HEK293T (cell line): ENCODE measurements at regions of chr4 and their contacts with region 1.

Region 1: GRCh38 chr4:95155759-95156451 is 392.9 kb downstream of the UNC5C start:
- DNase-seq: peak; percentile 27

Region 2: DNA sequence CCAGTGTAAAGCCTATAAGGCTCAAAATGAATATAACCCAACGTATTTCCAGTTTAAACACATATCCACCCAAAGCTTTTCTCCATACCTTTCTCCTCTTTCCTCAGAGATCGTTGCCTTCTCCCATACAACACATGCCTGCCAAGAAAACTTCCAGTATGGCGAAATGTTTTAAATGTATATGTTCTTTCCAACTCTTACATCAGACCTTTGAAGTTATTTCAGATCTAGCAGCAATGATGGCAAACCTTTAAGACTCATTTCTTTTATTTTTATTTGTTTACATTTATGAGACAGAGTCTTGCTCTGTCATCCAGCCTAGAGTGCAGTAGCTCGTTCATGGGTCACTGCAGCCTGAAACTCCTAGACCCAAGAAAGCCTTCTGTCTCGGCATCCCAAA is 132.8 kb before region 1 on chr4:
- CTCF ChIA-PET with region 1: no interaction called
- POLR2A ChIA-PET with region 1: no interaction called
- DNase-seq: no peak

Region 3: DNA sequence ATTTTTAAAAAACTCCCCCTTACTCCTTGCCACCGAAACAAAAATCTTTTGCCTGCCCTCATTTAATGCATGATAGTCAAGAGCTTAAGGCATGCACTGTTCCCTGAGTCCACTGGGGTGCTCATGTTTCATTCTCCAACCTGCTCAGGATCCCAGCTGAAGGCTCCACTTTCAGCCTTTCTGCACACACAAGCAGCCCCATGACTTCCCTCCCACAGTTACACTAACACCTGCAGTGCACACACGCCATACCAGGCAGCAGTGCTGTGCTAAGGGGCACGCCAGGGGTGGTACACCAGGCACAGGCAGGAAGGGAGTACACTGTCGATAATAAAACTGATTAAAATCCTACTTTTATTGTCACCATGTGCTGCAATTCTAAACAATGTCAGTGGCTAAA is 13.0 kb before region 1 on chr4:
- CTCF ChIA-PET with region 1: interaction called, 12 read pairs
- POLR2A ChIA-PET with region 1: no interaction called
- DNase-seq: peak; percentile 44

Region 4: GRCh38 chr4:95170176-95170575 is 14.3 kb after region 1 on chr4:
- CTCF ChIA-PET with region 1: no interaction called
- POLR2A ChIA-PET with region 1: no interaction called
- DNase-seq: no peak